Panc1 (cell line): ENCODE measurements at regions of chr15 and their contacts with region 1.

Region 1: DNA sequence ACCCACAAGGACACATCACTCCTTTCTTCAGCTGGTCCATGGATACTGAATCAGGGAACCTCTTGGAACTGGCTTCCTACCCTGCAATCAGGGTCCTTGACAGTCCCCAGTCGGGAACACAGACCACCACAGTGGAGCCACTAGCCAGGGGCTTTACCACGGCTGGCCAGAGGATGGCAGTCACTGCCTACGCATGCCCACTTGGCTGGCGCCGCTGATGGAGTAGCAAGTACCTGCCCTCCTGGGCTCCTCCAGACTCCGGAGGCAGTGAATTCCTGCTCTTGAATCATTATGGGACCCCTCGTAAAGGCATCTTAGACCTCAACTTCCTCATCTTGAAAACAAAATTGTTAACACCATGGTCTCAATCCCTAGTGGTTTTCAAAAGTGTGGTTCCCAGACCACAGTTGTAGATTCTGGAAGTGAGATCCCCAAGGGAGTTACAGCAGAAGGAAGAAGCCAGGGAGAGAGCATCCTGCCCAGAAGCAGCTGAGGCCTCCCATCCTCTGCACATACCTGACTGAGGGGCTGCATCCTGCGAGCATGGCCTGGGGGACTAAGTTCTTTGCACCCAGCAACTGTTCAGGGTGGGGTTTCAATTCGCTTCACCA is 9.1 kb upstream of the SKIC8 start:
- DNase-seq: peak; percentile 46
- ATAC-seq: peak; percentile 95
- H3K4me3 ChIP-seq: no peak overlapping the region; a peak in 1 of 4 replicates
- H3K27ac ChIP-seq: no peak overlapping the region; the same call in 1 of the 2 replicates
- H3K4me1 ChIP-seq: peaks cover 5% of the 10 kb centered on the region; the same call in 1 of the 2 replicates
- H3K27me3 ChIP-seq: no peaks in the 10 kb centered on the region
- CTCF ChIP-seq: peak; percentile 96

Region 2: GRCh38 chr15:78364233-78364632 is 55.7 kb after region 1 on chr15:
- CTCF ChIA-PET with region 1: no interaction called
- POLR2A ChIA-PET with region 1: no interaction called
- in situ Hi-C with region 1: no loop called
- intact Hi-C with region 1: no loop called
- DNase-seq: no peak
- ATAC-seq: peak; percentile 44; the same call in 1 of the 2 replicates
- H3K4me3 ChIP-seq: no peak overlapping the region
- H3K27ac ChIP-seq: no peak overlapping the region
- H3K4me1 ChIP-seq: no peaks in the 10 kb centered on the region
- H3K27me3 ChIP-seq: peaks cover 9% of the 10 kb centered on the region
- CTCF ChIP-seq: no peak

Region 3: DNA sequence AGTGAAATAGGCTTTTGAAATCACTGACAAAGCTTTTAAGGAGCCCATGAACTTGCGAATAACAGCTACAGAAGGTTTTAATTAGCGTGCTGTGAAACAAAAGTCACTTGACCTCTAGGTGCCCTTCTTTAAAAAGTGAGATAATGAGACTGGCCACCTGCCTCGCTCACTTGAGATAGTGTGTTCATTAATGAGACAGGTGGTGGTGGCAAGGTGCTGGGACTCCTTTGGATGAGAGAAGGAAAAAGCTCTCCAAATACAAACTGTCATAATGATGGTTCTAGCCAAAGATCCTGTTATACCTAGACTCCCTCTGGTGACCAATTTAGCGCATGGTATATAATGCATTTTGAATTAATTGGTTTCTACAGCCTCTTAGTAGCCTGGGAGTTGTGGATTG is 106.8 kb after region 1 on chr15:
- CTCF ChIA-PET with region 1: interaction called, 9 read pairs
- POLR2A ChIA-PET with region 1: no interaction called
- in situ Hi-C with region 1: no loop called
- intact Hi-C with region 1: loop called (anchors 2 kb)
- DNase-seq: no peak
- ATAC-seq: peak; percentile 90
- H3K4me3 ChIP-seq: no peak overlapping the region
- H3K27ac ChIP-seq: no peak overlapping the region
- H3K4me1 ChIP-seq: no peaks in the 10 kb centered on the region
- H3K27me3 ChIP-seq: peaks cover 2% of the 10 kb centered on the region; the same call in 1 of the 2 replicates
- CTCF ChIP-seq: no peak; the same call in 1 of the 2 replicates

Region 4: DNA sequence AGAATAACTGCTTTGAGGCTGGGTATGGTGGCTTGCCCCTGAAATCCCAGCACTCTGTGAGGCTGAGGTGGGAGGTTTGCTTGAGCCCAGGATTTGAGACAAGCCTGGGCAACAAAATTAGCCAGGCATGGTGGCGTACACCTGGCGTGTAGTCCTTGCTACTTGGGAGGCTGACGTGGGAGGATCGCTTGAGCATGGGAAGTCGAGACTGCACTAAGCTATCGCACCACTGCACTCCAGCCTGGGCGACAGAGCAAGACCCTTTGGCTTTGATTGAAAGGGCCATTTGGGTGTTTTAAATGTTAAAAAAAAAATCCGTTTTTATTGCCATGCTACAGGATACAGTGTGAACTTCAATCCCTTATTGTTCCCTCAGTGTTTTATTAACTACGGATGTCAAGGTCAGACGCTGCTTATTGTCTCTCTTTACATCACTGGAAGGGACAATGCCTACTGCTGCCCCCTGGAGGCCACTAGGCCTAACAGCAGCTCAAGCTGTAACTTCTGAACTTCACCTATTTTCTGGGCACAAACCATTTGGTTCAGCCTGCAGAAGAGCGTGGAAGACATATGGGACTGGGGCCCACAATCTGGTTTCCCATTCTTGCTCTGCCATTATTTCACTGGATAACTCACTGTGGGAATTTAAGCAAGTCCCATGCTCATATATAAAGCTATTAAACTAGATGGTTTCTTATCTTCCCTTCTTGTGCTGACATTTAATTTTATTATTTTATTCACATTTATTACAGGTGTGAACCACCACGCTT is 114.2 kb after region 1 on chr15:
- CTCF ChIA-PET with region 1: interaction called, 8 read pairs
- POLR2A ChIA-PET with region 1: no interaction called
- in situ Hi-C with region 1: no loop called
- intact Hi-C with region 1: loop called (anchors 2 kb)
- DNase-seq: peak; percentile 52
- ATAC-seq: peak; percentile 90
- H3K4me3 ChIP-seq: no peak overlapping the region
- H3K27ac ChIP-seq: no peak overlapping the region
- H3K4me1 ChIP-seq: no peaks in the 10 kb centered on the region
- H3K27me3 ChIP-seq: peaks cover 2% of the 10 kb centered on the region; the same call in 1 of the 2 replicates
- CTCF ChIP-seq: peak; percentile 96

Region 5: GRCh38 chr15:78481917-78482316 is 173.4 kb after region 1 on chr15:
- CTCF ChIA-PET with region 1: no interaction called
- POLR2A ChIA-PET with region 1: no interaction called
- in situ Hi-C with region 1: no loop called
- intact Hi-C with region 1: loop called (anchors 5 kb)
- DNase-seq: no peak
- ATAC-seq: peak; percentile 27; the same call in 1 of the 2 replicates
- H3K4me3 ChIP-seq: no peak overlapping the region
- H3K27ac ChIP-seq: peak overlapping the region; percentile 29; the same call in 1 of the 2 replicates
- H3K4me1 ChIP-seq: no peaks in the 10 kb centered on the region
- H3K27me3 ChIP-seq: no peaks in the 10 kb centered on the region
- CTCF ChIP-seq: no peak